Activated CD4-positive, alpha-beta memory T cell treated with anti-CD3 and anti-CD28 coated beads for 36 hours (primary cell): ENCODE measurements at regions of chr7 and their contacts with region 1.

Region 1: DNA sequence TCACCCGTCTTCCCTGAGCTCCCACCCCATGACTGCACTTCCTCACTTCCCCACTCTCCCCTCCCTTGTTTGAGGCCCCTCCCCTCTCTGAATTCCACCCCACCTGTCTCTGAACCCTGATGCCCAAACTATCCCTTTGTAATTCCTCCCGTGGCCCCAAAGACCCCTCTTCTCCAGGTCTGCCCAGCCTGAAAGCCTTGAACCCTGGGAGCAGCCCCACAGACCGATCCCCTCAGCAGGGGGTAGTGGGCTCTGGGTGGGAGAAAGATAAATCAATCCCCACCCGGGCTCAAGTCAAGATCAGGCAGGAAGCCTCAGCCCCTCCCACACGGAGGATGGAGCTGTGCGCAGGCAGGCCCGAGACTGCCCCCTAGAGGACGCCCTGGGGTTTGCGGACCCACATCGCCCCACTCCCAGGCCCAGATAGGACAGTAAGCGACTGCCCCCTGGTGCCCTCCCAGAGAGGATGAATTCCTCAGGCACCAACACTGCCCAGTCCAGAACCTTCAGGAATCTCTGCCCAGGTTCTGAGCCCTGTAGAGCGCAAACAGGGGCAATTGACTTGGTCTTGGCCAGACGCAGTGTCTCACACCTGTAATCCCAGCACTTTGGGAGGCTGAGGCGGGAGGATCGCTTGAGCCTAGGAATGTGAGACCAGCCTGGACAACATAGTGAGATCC is 11.7 kb downstream of the HSPB1 start:
- DNase-seq: peak; percentile 98
- H3K4me3 Mint-ChIP-seq: no peak overlapping the region
- H3K27ac Mint-ChIP-seq: peak overlapping the region; percentile 62
- H3K4me1 Mint-ChIP-seq: peaks cover 17% of the 10 kb centered on the region
- H3K27me3 Mint-ChIP-seq: no peaks in the 10 kb centered on the region

Region 2: DNA sequence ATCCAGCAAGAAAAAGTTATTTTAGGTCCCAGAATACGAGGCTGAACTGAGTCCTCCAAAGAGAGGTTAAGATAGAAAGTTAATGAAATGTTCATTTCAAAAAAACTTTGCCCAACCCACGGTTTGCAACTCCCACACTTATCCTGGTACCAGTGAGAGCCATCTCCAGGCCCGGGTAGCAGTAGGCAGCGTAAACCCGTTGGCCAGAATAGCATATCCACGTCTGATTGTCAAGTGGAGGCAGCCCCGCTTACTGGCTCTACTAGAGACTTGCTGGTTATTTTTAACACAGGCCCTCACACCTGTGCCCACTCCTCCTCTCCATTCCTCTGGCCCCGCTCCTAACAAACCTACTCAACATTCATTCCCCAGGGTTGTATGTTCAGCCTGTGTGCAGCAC is 685.1 kb before region 1 on chr7:
- CTCF ChIA-PET with region 1: no interaction called
- POLR2A ChIA-PET with region 1: no interaction called
- intact Hi-C with region 1: no loop called
- DNase-seq: no peak
- H3K4me3 Mint-ChIP-seq: no peak overlapping the region
- H3K27ac Mint-ChIP-seq: no peak overlapping the region
- H3K4me1 Mint-ChIP-seq: no peaks in the 10 kb centered on the region
- H3K27me3 Mint-ChIP-seq: no peaks in the 10 kb centered on the region

Region 3: GRCh38 chr7:75914730-75915585 is 399.2 kb before region 1 on chr7 and contains the start of gene POR:
- CTCF ChIA-PET with region 1: no interaction called
- POLR2A ChIA-PET with region 1: no interaction called
- intact Hi-C with region 1: loop called (anchors 2 kb)
- DNase-seq: peak; percentile 97
- H3K4me3 Mint-ChIP-seq: peak within 1 kb of the TSS; percentile 82
- H3K27ac Mint-ChIP-seq: peak within 1 kb of the TSS; percentile 87
- H3K4me1 Mint-ChIP-seq: peaks cover 27% of the 10 kb centered on the region
- H3K27me3 Mint-ChIP-seq: no peaks in the 10 kb centered on the region
- total RNA-seq, gene POR: 28.9 to 35.2 TPM

Region 4: DNA sequence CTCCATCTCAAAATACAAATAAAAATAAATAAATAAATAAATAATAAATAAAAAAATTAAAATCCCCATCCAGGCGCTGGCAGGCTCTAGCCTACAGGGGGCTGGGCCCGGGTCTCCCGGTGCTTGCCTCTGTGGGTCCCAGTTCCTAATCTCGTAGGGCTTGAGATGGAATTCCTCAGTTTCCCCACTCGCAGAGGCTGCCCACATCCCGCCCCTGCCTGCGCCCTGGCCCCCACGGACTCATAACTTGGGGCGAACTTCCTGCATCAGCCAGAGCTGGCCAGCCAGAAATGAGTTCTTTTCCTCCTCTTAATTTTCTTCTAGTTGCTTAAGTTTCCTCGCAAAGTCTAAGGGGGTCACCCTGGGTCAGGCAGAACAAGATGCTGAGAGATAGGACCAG is 134.5 kb before region 1 on chr7:
- CTCF ChIA-PET with region 1: interaction called, 152 read pairs
- POLR2A ChIA-PET with region 1: no interaction called
- intact Hi-C with region 1: loop called (anchors 1 kb)
- DNase-seq: no peak
- H3K4me3 Mint-ChIP-seq: no peak overlapping the region
- H3K27ac Mint-ChIP-seq: no peak overlapping the region
- H3K4me1 Mint-ChIP-seq: no peaks in the 10 kb centered on the region
- H3K27me3 Mint-ChIP-seq: peaks cover 1% of the 10 kb centered on the region

Region 5: GRCh38 chr7:76216381-76217082 is 97.7 kb before region 1 on chr7:
- CTCF ChIA-PET with region 1: no interaction called
- POLR2A ChIA-PET with region 1: no interaction called
- intact Hi-C with region 1: no loop called
- DNase-seq: no peak
- H3K4me3 Mint-ChIP-seq: no peak overlapping the region
- H3K27ac Mint-ChIP-seq: no peak overlapping the region
- H3K4me1 Mint-ChIP-seq: no peaks in the 10 kb centered on the region
- H3K27me3 Mint-ChIP-seq: peaks cover 30% of the 10 kb centered on the region

Region 6: DNA sequence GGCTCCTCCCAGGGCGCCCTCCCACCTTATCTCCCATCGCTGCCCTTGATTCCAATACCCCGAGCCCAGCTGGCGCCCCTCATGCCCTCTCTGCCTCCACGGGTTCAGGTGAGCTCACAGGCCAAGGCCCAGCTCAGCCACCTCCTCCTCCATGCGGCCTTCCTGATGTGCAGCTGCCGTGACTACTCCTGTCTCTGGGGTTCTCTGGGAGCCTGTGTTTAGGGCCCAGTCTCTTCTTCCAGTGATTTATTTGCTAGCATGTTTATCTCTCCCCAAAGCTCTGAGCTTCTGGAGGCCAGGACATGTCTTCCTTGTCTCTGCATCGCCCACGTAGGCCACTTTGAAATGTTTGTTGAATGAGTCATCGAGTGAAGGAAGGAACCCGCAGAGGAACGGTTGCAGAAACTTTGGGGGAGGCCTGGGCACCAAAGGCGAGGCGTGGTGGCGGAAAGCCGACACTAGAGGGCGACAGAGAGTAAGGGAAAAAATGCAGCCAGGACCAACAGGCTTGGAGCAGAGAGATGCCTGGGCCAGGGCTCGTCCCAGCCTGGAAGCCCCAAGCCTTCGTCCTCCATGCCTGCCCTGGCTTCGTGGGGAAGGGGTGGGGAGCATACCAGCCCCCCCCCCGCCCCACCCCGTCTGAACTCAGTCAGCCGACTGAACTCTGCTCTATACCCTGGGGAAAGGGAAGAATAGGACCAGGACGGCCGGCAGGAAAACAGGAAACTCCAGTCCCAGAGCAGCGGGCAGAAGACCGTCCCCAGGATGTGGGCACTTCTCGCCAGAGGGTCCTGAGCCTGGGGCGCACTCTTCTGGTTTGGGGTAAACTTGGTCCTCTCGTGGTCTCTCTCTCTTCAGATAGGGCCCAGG is 22.6 kb before region 1 on chr7:
- CTCF ChIA-PET with region 1: interaction called, 43 read pairs
- POLR2A ChIA-PET with region 1: interaction called, 6 read pairs
- intact Hi-C with region 1: loop called (anchors 1 kb)
- DNase-seq: peak; percentile 96
- H3K4me3 Mint-ChIP-seq: peak overlapping the region; percentile 0
- H3K27ac Mint-ChIP-seq: peak overlapping the region; percentile 61
- H3K4me1 Mint-ChIP-seq: peaks cover 10% of the 10 kb centered on the region
- H3K27me3 Mint-ChIP-seq: no peaks in the 10 kb centered on the region

Region 7: DNA sequence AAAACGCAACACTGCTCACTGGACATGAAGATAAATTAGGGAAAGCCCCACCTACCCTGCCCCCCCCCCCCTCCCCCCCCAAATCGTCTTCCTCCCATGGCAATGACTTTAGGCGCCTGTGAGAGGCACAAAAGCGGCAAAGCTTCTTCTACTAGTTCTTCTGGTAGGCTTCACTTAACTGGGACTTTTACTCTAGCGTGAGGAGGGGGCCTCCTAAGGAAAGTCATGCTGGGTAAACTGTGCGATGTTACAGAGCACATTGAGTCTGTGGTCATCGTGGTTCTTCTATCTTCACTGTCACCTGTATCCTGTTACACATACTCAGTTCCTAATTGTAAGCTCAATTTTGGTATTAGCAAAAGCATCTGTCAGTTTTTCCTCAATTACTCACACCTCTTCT is 13.4 kb after region 1 on chr7:
- CTCF ChIA-PET with region 1: interaction called, 11 read pairs
- POLR2A ChIA-PET with region 1: interaction called, 4 read pairs
- intact Hi-C with region 1: no loop called
- DNase-seq: no peak
- H3K4me3 Mint-ChIP-seq: no peak overlapping the region
- H3K27ac Mint-ChIP-seq: no peak overlapping the region
- H3K4me1 Mint-ChIP-seq: peaks cover 17% of the 10 kb centered on the region
- H3K27me3 Mint-ChIP-seq: no peaks in the 10 kb centered on the region

Region 8: DNA sequence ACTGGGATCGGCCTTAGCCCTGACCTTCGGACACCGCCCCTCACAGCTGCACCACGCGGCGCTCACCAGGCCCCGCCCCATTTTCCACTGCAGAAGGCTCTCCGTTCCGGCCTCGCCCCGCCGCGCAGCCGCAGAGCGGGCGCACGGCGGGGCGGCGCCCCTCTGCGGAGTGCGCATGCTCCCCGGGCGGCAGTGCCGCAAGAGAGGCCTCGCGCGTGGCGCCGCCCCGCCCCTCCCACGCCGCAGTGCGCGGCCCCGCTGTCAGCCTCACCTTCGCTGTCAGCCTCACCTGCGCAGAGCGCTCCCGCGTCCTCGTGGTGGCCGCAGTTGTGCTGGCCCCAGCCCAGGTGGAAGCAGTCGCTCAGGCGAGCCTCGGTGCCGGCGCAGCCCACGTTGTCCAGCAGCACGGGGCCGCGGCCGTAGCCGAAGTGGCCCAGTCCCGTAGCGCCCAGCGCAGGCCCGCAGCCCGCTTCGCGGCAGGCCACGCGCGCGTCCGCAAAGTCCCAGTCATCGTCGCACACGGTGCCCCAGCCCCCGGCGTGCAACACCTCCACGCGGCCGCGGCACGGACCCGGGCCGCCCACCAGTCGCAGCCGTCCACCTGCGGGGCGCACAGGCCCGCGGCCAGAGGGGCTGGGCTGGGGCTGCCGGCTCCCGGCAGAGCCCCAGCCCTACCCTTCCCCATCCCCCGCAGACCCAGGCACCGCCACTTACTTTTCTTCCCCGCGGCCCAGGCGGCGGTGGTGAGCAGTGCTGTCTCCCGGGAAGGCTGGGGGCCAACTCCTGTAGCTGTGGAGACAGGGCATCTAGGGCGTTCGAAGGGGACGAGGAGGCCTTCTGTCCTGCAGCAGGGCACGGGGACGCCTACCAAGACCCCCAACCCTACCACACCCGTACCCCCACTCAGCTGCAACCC is 79.2 kb after region 1 on chr7:
- CTCF ChIA-PET with region 1: no interaction called
- POLR2A ChIA-PET with region 1: no interaction called
- intact Hi-C with region 1: loop called (anchors 2 kb)
- DNase-seq: peak; percentile 94
- H3K4me3 Mint-ChIP-seq: peak overlapping the region; percentile 81
- H3K27ac Mint-ChIP-seq: peak overlapping the region; percentile 94
- H3K4me1 Mint-ChIP-seq: peaks cover 26% of the 10 kb centered on the region
- H3K27me3 Mint-ChIP-seq: no peaks in the 10 kb centered on the region